Right lobe of liver (tissue), 6 donors: ENCODE measurements at regions of chr16 and their contacts with region 1.

Region 1: GRCh38 chr16:1667251-1667650 is 10.8 kb upstream of the JPT2 start:
- DNase-seq: no peak
- ATAC-seq: peak in 1 of 4 donors; percentile 7
- H3K4me3 ChIP-seq: no peak overlapping the region
- H3K27ac ChIP-seq: no peak overlapping the region
- H3K4me1 ChIP-seq: no peaks in the 10 kb centered on the region
- H3K27me3 ChIP-seq: no peaks in the 10 kb centered on the region
- CTCF ChIP-seq: no peak
- POLR2A ChIP-seq: no peak

Region 2: DNA sequence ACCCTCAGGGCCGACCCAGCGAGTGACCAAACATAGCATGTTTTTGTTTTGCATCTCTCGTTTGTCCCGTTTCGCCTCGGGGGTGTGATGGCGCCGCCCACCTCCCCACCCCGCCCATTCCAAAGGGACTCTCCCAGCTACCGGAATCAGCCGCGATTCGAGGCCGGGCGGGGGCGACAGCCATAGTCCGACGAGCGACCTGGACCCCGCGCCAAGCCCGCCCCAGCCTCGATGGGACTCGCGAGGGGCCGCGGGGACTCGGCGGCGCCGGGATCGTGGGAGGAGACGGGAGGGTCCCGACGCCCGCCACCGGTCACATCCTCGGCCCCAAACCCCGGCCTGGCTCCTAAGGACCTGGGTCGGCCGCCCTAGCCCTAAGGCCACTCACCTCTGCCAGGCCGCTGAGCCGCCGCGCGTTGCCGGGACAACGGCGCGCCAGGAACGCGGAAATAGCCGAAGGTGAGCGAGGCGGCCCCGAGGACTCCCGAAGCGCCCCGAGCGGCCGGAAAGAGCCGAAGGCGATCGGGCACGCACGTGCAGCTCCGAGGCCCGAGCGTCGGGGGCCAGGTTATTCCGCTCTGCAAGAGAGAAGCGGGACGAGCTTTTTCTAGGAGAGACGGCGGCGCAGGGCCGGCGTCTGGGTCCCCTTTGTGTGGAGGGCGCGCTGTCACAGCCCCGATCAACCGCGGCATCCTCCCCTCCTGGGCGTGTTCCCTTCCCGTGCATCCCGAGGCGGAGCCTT is 56.8 kb before region 1 on chr16:
- intact Hi-C with region 1: loop called in 1 of 2 experiments (anchors 10 kb)
- DNase-seq: peak; percentile 87 to 88 (median 87)
- ATAC-seq: peak; percentile 78 to 81 (median 80)
- H3K4me3 ChIP-seq: peak overlapping the region; percentile 61 to 96 (median 64)
- H3K27ac ChIP-seq: peak overlapping the region; percentile 44 to 64 (median 46)
- H3K4me1 ChIP-seq: peaks cover 0 to 26% (median 8%) of the 10 kb centered on the region in 4 donors
- H3K27me3 ChIP-seq: no peaks in the 10 kb centered on the region
- CTCF ChIP-seq: no peak
- POLR2A ChIP-seq: no peak